ENCODE measurements at regions of chr10 and their contacts with region 1.

Region 1: GRCh38 chr10:94439275-94439861 is 37.0 kb downstream of the TBC1D12 start:
- DNase-seq: no peak
- ATAC-seq: no peak
- H3K4me3 Mint-ChIP-seq: no peak overlapping the region
- H3K27ac Mint-ChIP-seq: no peak overlapping the region
- H3K4me1 Mint-ChIP-seq: no peaks in the 10 kb centered on the region
- H3K27me3 Mint-ChIP-seq: no peaks in the 10 kb centered on the region
- CTCF ChIP-seq: no peak

Region 2: DNA sequence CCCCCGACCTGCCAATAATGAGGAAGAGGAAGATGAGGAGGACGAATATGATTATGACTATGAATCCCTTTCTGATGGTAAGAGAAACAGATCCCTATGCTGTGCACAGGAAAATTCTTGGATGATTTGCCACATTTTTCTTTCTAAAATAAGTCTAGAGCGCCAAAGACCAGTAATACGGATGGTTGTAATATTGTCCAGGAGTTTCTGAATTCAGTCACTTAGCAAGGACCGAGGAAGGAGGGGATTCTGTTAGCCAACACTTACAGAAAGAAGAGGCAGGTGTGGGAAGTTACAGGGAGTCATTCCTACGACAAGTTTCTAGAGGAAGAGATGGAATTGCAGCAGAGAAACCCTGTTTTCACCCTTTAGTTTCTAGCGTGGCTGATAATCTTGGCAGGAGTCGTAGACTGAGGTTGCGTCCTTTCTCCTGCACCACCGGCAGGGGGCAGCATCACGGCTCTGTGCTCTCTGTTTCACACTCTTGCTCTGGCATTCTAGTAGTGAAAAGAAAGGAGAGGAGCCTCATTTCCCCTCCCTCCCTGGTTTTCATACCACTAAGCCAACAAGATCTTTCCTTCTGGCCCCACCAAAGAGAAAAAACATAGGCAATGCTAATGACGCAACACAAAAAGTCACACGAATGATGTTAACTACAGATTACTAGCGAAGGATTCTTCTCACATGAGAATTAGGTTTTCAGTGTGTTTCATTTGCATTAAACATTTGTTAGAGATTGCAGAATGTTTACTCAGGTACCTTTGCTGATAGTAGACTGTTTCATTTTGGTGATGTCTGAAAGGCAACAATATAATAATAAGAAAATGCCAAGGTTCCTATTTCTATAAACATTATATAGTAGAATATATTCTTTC is 159.3 kb before region 1 on chr10:
- CTCF ChIA-PET with region 1: interaction called, 37 read pairs
- POLR2A ChIA-PET with region 1: no interaction called
- intact Hi-C with region 1: loop called (anchors 1 kb)
- DNase-seq: peak; percentile 49
- ATAC-seq: peak; percentile 57
- H3K4me3 Mint-ChIP-seq: no peak overlapping the region
- H3K27ac Mint-ChIP-seq: no peak overlapping the region
- H3K4me1 Mint-ChIP-seq: peaks cover 5% of the 10 kb centered on the region
- H3K27me3 Mint-ChIP-seq: peaks cover 14% of the 10 kb centered on the region
- CTCF ChIP-seq: peak; percentile 76

Region 3: DNA sequence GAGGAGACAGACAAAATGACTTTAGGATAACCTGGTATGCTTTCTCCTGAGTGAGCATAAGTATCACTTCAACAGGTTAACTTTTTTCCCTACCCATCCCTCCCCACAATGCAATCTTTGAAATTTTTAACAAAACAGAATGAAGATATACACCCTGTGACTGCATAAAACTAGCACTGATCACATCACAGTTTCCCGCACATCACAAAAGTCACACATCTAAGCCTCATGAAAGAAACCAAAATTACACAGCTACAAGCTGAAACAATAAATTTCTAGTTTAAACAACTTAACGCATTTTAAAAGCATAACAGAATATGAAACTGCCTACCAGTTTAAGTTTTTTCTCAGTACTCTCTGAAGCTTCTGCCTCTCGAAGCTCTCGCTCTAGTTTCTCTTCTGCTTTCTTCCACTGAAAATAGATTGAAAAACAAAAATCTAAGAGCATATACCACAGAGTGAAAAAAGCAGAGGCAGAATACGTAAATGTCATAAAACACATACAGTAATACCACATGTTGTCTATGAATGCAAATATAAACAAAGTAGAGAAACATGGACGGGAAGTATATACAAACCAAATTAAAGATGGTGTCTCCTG is 94.7 kb before region 1 on chr10:
- CTCF ChIA-PET with region 1: no interaction called
- POLR2A ChIA-PET with region 1: no interaction called
- intact Hi-C with region 1: loop called (anchors 5 kb)
- DNase-seq: no peak
- ATAC-seq: peak; percentile 91
- H3K4me3 Mint-ChIP-seq: peak overlapping the region; percentile 79
- H3K27ac Mint-ChIP-seq: peak overlapping the region; percentile 90
- H3K4me1 Mint-ChIP-seq: peaks cover 31% of the 10 kb centered on the region
- H3K27me3 Mint-ChIP-seq: no peaks in the 10 kb centered on the region
- CTCF ChIP-seq: no peak

Region 4: GRCh38 chr10:94402015-94402842 is 37.1 kb before region 1 on chr10 and contains the start of gene TBC1D12:
- CTCF ChIA-PET with region 1: interaction called, 7 read pairs
- POLR2A ChIA-PET with region 1: no interaction called
- intact Hi-C with region 1: loop called (anchors 1 kb)
- DNase-seq: peak; percentile 56
- ATAC-seq: peak; percentile 54
- H3K4me3 Mint-ChIP-seq: peak within 1 kb of the TSS; percentile 88
- H3K27ac Mint-ChIP-seq: peak within 1 kb of the TSS; percentile 83
- H3K4me1 Mint-ChIP-seq: peaks cover 15% of the 10 kb centered on the region
- H3K27me3 Mint-ChIP-seq: peaks cover 19% of the 10 kb centered on the region
- CTCF ChIP-seq: no peak
- total RNA-seq, gene TBC1D12: 6.1 and 7.0 TPM in 2 replicates

Measured in activated B cell treated with CpG ODN at 0.5 μM for 24 hours (primary cell).